Astrocyte of the cerebellum (primary cell): ENCODE measurements at regions of chr4 and their contacts with region 1.

Region 1: GRCh38 chr4:174365018-174365587 is 81.4 kb downstream of the CEP44 start:
- DNase-seq: peak; percentile 22
- H3K4me3 ChIP-seq: no peak overlapping the region
- CTCF ChIP-seq: peak; percentile 13

Region 2: GRCh38 chr4:174318829-174319764 is 46.0 kb before region 1 on chr4:
- in situ Hi-C with region 1: no loop called
- DNase-seq: no peak
- H3K4me3 ChIP-seq: no peak overlapping the region
- CTCF ChIP-seq: peak; percentile 39

Region 3: GRCh38 chr4:174604198-174604597 is 239.1 kb after region 1 on chr4:
- in situ Hi-C with region 1: loop called (anchors 25 kb)
- DNase-seq: no peak
- H3K4me3 ChIP-seq: no peak overlapping the region
- CTCF ChIP-seq: no peak

Region 4: GRCh38 chr4:175035905-175036304 is 670.8 kb after region 1 on chr4:
- in situ Hi-C with region 1: no loop called
- DNase-seq: peak; percentile 63
- H3K4me3 ChIP-seq: no peak overlapping the region
- CTCF ChIP-seq: no peak

Region 5: GRCh38 chr4:175536852-175537453 is 1171.8 kb after region 1 on chr4:
- in situ Hi-C with region 1: loop called (anchors 25 kb)
- DNase-seq: peak; percentile 75
- H3K4me3 ChIP-seq: no peak overlapping the region
- CTCF ChIP-seq: peak; percentile 45